Activated naive CD4-positive, alpha-beta T cell treated with anti-CD3 and anti-CD28 coated beads for 36 hours (primary cell): ENCODE measurements at regions of chr15 and their contacts with region 1.

Region 1: DNA sequence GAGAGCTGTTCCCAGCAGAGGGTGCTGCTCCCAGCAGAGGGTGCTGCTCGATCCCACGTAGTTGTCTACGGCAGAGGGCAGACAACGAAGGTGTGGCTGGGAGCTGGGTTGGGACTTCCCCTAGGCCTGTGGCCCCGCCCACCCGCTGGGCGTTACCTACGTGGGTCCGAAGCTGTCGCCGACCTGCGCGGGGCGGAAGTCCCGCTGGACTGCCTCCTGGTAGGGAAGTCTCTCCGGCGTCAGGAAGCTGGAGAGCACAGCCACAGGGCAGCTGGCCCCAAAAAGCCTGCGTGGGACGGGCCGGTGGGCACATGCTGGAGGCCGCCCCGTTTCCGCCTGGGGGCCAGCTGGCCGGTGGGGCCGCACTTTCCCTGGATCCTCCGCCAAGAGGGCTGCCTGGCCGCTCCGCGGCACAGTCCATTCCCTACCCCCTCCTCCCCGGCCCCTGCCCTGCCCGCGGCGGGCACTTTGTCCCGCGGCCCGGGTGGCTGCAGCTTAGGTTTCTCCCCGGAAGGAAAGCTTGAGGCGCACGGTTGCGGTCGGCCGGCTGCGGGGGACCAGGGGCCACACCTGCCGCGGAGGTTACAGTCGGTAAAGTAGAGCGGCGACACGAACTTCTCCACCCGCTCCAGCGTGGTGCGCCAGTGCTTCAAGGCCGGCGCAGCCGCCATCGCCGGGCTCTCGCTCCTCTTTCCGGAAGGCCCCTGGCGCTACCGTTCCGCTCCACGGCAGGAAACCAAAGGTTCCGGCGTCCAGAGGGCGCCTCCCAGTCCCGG is at the start of gene MAN2C1:
- DNase-seq: peak; percentile 96
- H3K4me3 Mint-ChIP-seq: peak within 1 kb of the TSS; percentile 90
- H3K27ac Mint-ChIP-seq: peak within 1 kb of the TSS; percentile 94
- H3K4me1 Mint-ChIP-seq: peaks cover 27% of the 10 kb centered on the region
- H3K27me3 Mint-ChIP-seq: no peaks in the 10 kb centered on the region
- total RNA-seq, gene MAN2C1: 228 to 247 TPM

Region 2: DNA sequence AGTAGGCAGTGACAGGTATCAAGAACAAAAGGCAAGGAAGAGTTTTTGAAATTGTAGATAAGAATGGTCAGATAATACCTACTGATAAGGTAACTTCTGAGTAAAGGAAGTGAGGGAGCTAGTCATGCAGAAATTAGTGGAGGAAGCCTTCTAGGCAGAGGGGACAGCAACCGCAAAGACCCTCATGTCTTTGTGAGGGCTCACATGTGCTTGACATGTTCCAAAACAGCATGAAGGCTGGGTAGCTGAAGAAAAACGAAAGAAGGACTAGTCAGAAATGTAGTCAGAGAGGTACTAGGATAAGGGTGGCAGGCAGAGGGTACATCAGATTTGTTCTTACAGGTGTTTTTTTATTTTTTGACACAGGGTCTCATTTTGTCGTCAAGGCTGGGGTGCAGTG is 78.0 kb after region 1 on chr15:
- CTCF ChIA-PET with region 1: interaction called, 12 read pairs
- intact Hi-C with region 1: no loop called
- DNase-seq: peak; percentile 18
- H3K4me3 Mint-ChIP-seq: no peak overlapping the region
- H3K27ac Mint-ChIP-seq: peak overlapping the region; percentile 74
- H3K4me1 Mint-ChIP-seq: peaks cover 70% of the 10 kb centered on the region
- H3K27me3 Mint-ChIP-seq: no peaks in the 10 kb centered on the region

Region 3: GRCh38 chr15:75578948-75579920 is 211.1 kb after region 1 on chr15 and contains the start of gene PTPN9:
- CTCF ChIA-PET with region 1: interaction called, 4 read pairs
- intact Hi-C with region 1: loop called (anchors 2 kb)
- DNase-seq: peak; percentile 76
- H3K4me3 Mint-ChIP-seq: peak within 1 kb of the TSS; percentile 90
- H3K27ac Mint-ChIP-seq: peak within 1 kb of the TSS; percentile 86
- H3K4me1 Mint-ChIP-seq: peaks cover 14% of the 10 kb centered on the region
- H3K27me3 Mint-ChIP-seq: no peaks in the 10 kb centered on the region
- total RNA-seq, gene PTPN9: 9.5 to 10.1 TPM

Region 4: GRCh38 chr15:75639709-75640482 is 271.8 kb after region 1 on chr15 and contains the start of gene IMP3:
- CTCF ChIA-PET with region 1: interaction called, 38 read pairs
- intact Hi-C with region 1: loop called (anchors 1 kb)
- DNase-seq: peak; percentile 97
- H3K4me3 Mint-ChIP-seq: peak within 1 kb of the TSS; percentile 95
- H3K27ac Mint-ChIP-seq: peak within 1 kb of the TSS; percentile 91
- H3K4me1 Mint-ChIP-seq: peaks cover 30% of the 10 kb centered on the region
- H3K27me3 Mint-ChIP-seq: no peaks in the 10 kb centered on the region
- total RNA-seq, gene IMP3: 46.1 to 46.8 TPM

Region 5: DNA sequence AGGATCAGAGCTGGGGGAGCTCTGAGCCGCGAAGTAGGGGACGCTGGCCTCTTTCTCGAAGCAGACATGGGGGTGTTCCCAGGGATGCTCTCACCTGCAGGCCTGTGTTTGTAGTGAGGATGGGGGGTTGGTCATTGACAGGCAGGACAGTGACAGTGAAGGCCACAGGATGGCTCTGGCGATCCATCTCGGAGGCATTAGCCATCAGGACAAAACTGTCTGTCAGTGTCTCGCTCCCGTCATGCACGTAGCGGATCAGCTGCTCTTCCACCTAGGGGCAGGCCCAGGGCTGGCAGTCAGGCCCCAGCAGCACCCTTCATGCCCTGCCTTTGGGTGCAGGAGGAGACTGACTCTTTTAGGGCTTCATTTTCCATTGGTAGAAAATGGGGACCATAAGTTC is 316.5 kb after region 1 on chr15:
- CTCF ChIA-PET with region 1: interaction called, 12 read pairs
- intact Hi-C with region 1: loop called (anchors 1 kb)
- DNase-seq: no peak
- H3K4me3 Mint-ChIP-seq: no peak overlapping the region
- H3K27ac Mint-ChIP-seq: no peak overlapping the region
- H3K4me1 Mint-ChIP-seq: no peaks in the 10 kb centered on the region
- H3K27me3 Mint-ChIP-seq: no peaks in the 10 kb centered on the region